Heart left ventricle (tissue), 16 donors: ENCODE measurements at regions of chr1 and their contacts with region 1.

Region 1: GRCh38 chr1:211654838-211655787 is 20.3 kb downstream of the NEK2 start:
- DNase-seq: peak; percentile 84 to 91 (median 87)
- ATAC-seq: peak; percentile 87 to 98 (median 94)
- H3K4me3 ChIP-seq: peak overlapping the region in 6 of 12 donors; percentile 0 to 32 (median 18)
- H3K27ac ChIP-seq: no peak overlapping the region
- H3K4me1 ChIP-seq: peaks cover 0 to 3% (median 0%) of the 10 kb centered on the region in 12 donors
- H3K27me3 ChIP-seq: no peaks in the 10 kb centered on the region
- CTCF ChIP-seq: peak; percentile 87 to 97 (median 93)
- POLR2A ChIP-seq: no peak

Region 2: DNA sequence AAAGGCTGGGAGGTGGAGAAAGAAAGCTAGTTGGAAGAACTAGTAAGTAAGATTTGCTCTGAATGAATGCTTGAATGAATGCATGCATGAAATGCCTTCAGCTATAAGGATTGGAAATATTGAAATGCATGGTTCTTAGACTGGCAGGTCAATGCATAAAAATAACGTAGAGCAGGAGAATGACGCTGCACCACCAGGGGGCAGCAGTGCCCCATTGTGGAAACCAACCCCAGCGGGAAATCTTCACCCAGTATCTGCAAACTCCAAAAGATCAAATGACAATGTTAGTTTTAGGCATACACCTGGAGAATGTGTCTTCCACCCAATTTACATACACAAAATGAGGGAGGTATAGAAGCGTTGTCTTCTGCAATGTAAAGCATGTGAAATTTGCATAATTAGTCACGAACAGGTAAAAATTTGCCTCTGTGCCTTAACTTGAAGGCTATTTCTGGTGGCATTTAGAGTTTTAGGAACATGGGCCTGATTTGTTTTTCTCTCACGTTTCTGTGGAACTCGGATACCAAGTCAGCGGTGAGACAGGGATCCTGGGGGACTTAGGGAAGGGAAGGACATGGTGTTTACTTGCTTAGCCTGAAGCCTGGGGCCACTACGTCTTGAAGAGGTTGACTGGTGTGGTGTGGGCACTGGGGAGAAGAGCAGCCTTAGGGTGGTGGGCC is 1247.8 kb before region 1 on chr1:
- intact Hi-C with region 1: loop called in 1 of 10 experiments (anchors 5 kb)
- DNase-seq: peak; percentile 33 to 77 (median 44)
- ATAC-seq: peak in 2 of 4 donors; percentile 63 to 68
- H3K4me3 ChIP-seq: no peak overlapping the region
- H3K27ac ChIP-seq: no peak overlapping the region
- H3K4me1 ChIP-seq: no peaks in the 10 kb centered on the region
- H3K27me3 ChIP-seq: no peaks in the 10 kb centered on the region
- CTCF ChIP-seq: peak; percentile 88 to 99 (median 96)
- POLR2A ChIP-seq: no peak

Region 3: GRCh38 chr1:211323156-211324063 is 331.7 kb before region 1 on chr1:
- intact Hi-C with region 1: loop called in 8 of 10 experiments (anchors 2 to 10 kb)
- DNase-seq: peak in 2 of 5 donors; percentile 31 to 45
- ATAC-seq: peak in 3 of 4 donors; percentile 51 to 68 (median 54)
- H3K4me3 ChIP-seq: no peak overlapping the region
- H3K27ac ChIP-seq: no peak overlapping the region
- H3K4me1 ChIP-seq: peaks cover 0 to 20% (median 8%) of the 10 kb centered on the region in 12 donors
- H3K27me3 ChIP-seq: no peaks in the 10 kb centered on the region
- CTCF ChIP-seq: peak; percentile 43 to 78 (median 62)
- POLR2A ChIP-seq: no peak

Region 4: GRCh38 chr1:211469938-211470529 is 185.1 kb before region 1 on chr1:
- intact Hi-C with region 1: loop called in 7 of 10 experiments (anchors 2 to 10 kb)
- DNase-seq: peak; percentile 72 to 87 (median 83)
- ATAC-seq: peak; percentile 79 to 96 (median 93)
- H3K4me3 ChIP-seq: no peak overlapping the region
- H3K27ac ChIP-seq: peak overlapping the region in 1 of 12 donors; percentile 4
- H3K4me1 ChIP-seq: peaks cover 0 to 20% (median 9%) of the 10 kb centered on the region in 12 donors
- H3K27me3 ChIP-seq: no peaks in the 10 kb centered on the region
- CTCF ChIP-seq: peak; percentile 78 to 91 (median 82)
- POLR2A ChIP-seq: no peak

Region 5: DNA sequence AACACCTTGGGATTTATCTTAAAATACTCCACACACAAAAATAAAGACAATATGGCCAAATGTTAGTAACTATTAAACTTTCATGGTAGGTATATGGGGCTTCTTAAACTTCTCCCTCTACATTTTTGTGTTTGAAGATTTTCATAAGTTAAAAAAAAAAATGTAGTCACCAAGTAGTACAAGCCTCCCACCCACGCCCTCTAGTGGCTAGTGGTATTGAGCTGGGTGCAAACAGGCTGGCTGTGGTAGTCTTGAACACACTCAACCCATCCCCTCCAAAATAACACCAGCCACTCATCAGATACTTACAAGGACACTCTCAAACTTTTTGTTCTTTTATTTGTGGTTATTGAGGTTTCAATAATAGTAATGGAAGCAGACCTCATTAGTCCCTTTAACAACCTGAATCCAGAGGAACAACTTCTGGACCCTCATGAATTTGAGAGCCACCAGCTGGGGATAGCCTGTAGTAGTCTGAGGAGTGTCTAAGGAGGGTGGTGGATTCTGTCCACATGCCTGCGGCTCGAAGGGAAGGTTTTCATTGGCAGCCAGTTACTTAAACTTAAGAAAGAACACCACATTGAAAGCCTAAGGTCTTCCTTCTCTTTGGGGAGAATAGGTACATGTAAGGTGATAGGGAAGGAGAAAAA is 178.8 kb before region 1 on chr1:
- intact Hi-C with region 1: loop called in 7 of 10 experiments (anchors 2 to 10 kb)
- DNase-seq: peak in 4 of 5 donors; percentile 58 to 72 (median 63)
- ATAC-seq: peak in 2 of 4 donors; percentile 64 to 67
- H3K4me3 ChIP-seq: no peak overlapping the region
- H3K27ac ChIP-seq: no peak overlapping the region
- H3K4me1 ChIP-seq: peaks cover 0 to 6% (median 0%) of the 10 kb centered on the region in 12 donors
- H3K27me3 ChIP-seq: peaks cover 0 to 27% (median 8%) of the 10 kb centered on the region in 9 donors
- CTCF ChIP-seq: peak; percentile 58 to 88 (median 74)
- POLR2A ChIP-seq: no peak

Region 6: GRCh38 chr1:211514030-211514754 is 140.9 kb before region 1 on chr1:
- intact Hi-C with region 1: loop called (anchors 1 to 5 kb)
- DNase-seq: peak; percentile 71 to 87 (median 81)
- ATAC-seq: peak; percentile 86 to 91 (median 88)
- H3K4me3 ChIP-seq: no peak overlapping the region
- H3K27ac ChIP-seq: no peak overlapping the region
- H3K4me1 ChIP-seq: peaks cover 0 to 17% (median 8%) of the 10 kb centered on the region in 12 donors
- H3K27me3 ChIP-seq: peaks cover 0 to 8% (median 0%) of the 10 kb centered on the region in 9 donors
- CTCF ChIP-seq: peak; percentile 64 to 86 (median 75)
- POLR2A ChIP-seq: no peak